ENCODE measurements at regions of chr16 and their contacts with region 1.

Region 1: GRCh38 chr16:57091975-57092785 is at the start of gene CPNE2:
- DNase-seq: peak; percentile 44 to 49
- ATAC-seq: peak; percentile 88 to 89
- H3K4me3 ChIP-seq: peak within 1 kb of the TSS; percentile 72 to 84 (median 78)
- H3K27ac ChIP-seq: peak within 1 kb of the TSS; percentile 64 to 80 (median 76)
- H3K4me1 ChIP-seq: peaks cover 11 to 17% of the 10 kb centered on the region in 2 donors
- H3K27me3 ChIP-seq: no peaks in the 10 kb centered on the region
- CTCF ChIP-seq: no peak
- POLR2A ChIP-seq: peak; percentile 48 to 63
- total RNA-seq, gene CPNE2: 11.7 to 20.0 (median 17.2) TPM

Region 2: GRCh38 chr16:57061084-57061905 is 30.9 kb before region 1 on chr16:
- in situ Hi-C with region 1: no loop called
- intact Hi-C with region 1: loop called (anchors 1 kb)
- DNase-seq: peak; percentile 85 to 97
- ATAC-seq: peak; percentile 89 to 94
- H3K4me3 ChIP-seq: peak overlapping the region in 3 of 4 donors; percentile 11 to 32 (median 23)
- H3K27ac ChIP-seq: peak overlapping the region; percentile 83 to 89 (median 85)
- H3K4me1 ChIP-seq: peaks cover 17 to 20% of the 10 kb centered on the region in 2 donors
- H3K27me3 ChIP-seq: no peaks in the 10 kb centered on the region
- CTCF ChIP-seq: peak in 1 of 5 experiments; percentile 27
- POLR2A ChIP-seq: peak; percentile 48 to 69

Region 3: DNA sequence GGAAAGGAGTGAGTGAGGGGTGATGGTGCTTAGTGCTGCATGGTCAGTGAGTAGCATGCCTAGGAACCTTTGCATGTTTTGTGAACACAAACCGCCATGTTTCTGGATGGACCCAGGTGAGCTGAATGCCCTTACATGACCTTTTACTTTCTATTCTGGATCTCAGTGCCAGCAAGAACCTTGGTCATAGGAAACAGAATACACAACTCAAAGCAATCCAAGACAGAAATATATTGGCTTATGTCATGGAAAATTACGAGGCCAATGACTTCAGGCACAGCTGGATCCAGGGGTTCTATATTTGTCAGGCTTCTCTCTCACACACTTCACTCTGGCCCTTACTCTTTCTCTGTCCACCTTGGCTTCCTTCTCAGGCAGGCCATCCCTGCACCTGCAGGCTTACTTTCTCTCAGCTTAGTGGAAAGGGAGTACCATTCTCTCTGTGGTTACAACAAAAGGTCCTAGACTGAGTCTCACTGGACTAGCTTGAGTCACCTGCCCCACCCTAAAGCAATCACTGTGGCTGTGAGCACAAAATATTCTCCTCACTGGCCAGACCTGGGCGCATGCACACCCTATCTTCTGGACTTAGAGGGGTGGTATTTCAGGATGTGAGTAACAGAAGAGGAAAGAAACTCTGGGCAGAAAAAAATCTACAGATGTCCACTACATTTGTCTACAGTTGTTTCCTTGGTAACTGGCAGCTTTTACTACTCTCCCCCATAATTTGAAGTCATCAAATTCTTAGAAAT is 20.2 kb before region 1 on chr16:
- in situ Hi-C with region 1: no loop called
- intact Hi-C with region 1: no loop called
- DNase-seq: no peak
- ATAC-seq: peak; percentile 73 to 80
- H3K4me3 ChIP-seq: no peak overlapping the region
- H3K27ac ChIP-seq: peak overlapping the region in 3 of 4 donors; percentile 4 to 57 (median 49)
- H3K4me1 ChIP-seq: peaks cover 0 to 4% of the 10 kb centered on the region in 2 donors
- H3K27me3 ChIP-seq: no peaks in the 10 kb centered on the region
- CTCF ChIP-seq: no peak
- POLR2A ChIP-seq: no peak

Region 4: DNA sequence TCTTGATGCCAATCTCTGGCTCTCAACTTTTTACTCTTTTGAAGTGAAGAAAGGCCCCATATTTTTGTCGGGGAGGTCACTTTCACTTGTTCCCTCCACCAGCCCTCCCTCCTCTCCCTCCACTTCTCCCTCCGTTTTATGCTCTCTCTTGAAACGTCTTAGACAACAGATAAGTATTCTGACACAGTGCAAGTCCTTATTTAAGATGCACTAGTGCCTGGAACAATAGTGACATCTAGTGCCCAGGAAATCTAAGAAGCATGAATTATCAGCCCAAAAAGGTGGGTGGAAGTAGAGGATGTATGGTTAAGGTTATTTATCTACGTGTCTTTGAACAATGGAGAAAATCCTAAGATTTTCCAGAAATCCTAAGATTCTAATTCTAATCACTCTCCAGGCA is 75.8 kb after region 1 on chr16:
- in situ Hi-C with region 1: loop called in 2 of 4 experiments (anchors 5 to 10 kb)
- intact Hi-C with region 1: no loop called
- DNase-seq: no peak
- ATAC-seq: peak in 1 of 2 donors; percentile 58
- H3K4me3 ChIP-seq: no peak overlapping the region
- H3K27ac ChIP-seq: no peak overlapping the region
- H3K4me1 ChIP-seq: no peaks in the 10 kb centered on the region
- H3K27me3 ChIP-seq: no peaks in the 10 kb centered on the region
- CTCF ChIP-seq: peak in 4 of 5 experiments; percentile 11 to 51 (median 38)
- POLR2A ChIP-seq: no peak

Region 5: GRCh38 chr16:57185944-57186871 is 94.0 kb after region 1 on chr16 and contains the starts of genes PSME3IP1 and RSPRY1:
- in situ Hi-C with region 1: no loop called
- intact Hi-C with region 1: loop called (anchors 2 kb)
- DNase-seq: peak; percentile 99
- ATAC-seq: peak; percentile 97 to 99
- H3K4me3 ChIP-seq: peak within 1 kb of the TSS; percentile 81 to 94 (median 92)
- H3K27ac ChIP-seq: peak within 1 kb of the TSS; percentile 92 to 97 (median 95)
- H3K4me1 ChIP-seq: peaks cover 32 to 40% of the 10 kb centered on the region in 2 donors
- H3K27me3 ChIP-seq: no peaks in the 10 kb centered on the region
- CTCF ChIP-seq: peak in 2 of 5 experiments; percentile 35 to 40
- POLR2A ChIP-seq: peak; percentile 84 to 85
- total RNA-seq, gene PSME3IP1: 43.8 to 57.6 (median 53.4) TPM
- total RNA-seq, gene RSPRY1: 15.4 to 24.1 (median 20.7) TPM

Region 6: DNA sequence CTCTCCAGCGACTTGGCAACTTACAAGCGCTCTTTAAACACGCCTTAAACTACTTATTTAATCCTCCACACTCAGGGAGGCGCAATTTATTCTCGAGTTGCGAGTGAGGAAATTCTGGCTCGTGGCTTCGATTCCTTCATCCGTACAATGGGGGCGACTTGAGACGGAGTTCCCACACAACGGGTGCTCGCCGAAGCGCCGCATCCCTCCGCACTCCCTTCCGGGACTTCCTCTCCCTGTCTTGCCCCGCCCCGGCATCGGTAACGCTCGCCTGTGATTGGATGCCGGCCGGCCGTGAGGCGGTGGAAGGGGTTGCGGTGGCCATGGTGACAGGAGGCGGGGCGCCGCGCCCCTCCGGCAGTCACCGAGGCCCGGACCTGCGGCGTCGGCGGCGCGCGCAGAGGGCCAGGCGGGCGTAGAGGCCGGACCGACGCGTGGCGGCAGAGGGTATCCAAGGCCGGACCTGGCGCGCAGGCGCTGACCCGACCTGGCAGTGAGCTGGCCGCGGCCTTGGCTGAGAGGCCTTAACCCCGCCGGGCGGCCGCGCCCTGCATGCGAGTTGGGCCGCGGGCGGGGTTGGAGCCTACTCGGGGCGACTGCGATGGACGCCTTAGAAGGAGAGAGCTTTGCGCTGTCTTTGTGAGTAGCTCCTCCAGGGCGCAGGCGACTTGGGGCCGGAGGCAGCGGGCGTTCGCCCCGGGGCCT is 152.7 kb after region 1 on chr16 and contains the start of gene ARL2BP:
- in situ Hi-C with region 1: no loop called
- intact Hi-C with region 1: loop called (anchors 10 kb)
- DNase-seq: peak; percentile 96 to 98
- ATAC-seq: peak; percentile 92 to 93
- H3K4me3 ChIP-seq: peak within 1 kb of the TSS; percentile 75 to 97 (median 87)
- H3K27ac ChIP-seq: peak within 1 kb of the TSS; percentile 91 to 99 (median 94)
- H3K4me1 ChIP-seq: peaks cover 8 to 12% of the 10 kb centered on the region in 2 donors
- H3K27me3 ChIP-seq: no peaks in the 10 kb centered on the region
- CTCF ChIP-seq: no peak
- POLR2A ChIP-seq: peak; percentile 69 to 79
- total RNA-seq, gene ARL2BP: 25.5 to 52.6 (median 44.5) TPM

Region 7: GRCh38 chr16:57413301-57413730 is 321.1 kb after region 1 on chr16:
- in situ Hi-C with region 1: loop called in 1 of 4 experiments (anchors 25 kb)
- intact Hi-C with region 1: loop called (anchors 10 kb)
- DNase-seq: no peak
- ATAC-seq: no peak
- H3K4me3 ChIP-seq: no peak overlapping the region
- H3K27ac ChIP-seq: no peak overlapping the region
- H3K4me1 ChIP-seq: peaks cover 6% of the 10 kb centered on the region in 2 donors
- H3K27me3 ChIP-seq: no peaks in the 10 kb centered on the region
- CTCF ChIP-seq: no peak
- POLR2A ChIP-seq: no peak